ENCODE measurements at regions of chr6 and their contacts with region 1.

Region 1: GRCh38 chr6:31197559-31198305 is 27.2 kb upstream of the POU5F1 start:
- DNase-seq: peak; percentile 74
- H3K4me3 ChIP-seq: peak overlapping the region; percentile 51 to 88 (median 79)
- H3K27ac ChIP-seq: peak overlapping the region; percentile 93
- H3K4me1 ChIP-seq: peaks cover 4% of the 10 kb centered on the region
- H3K27me3 ChIP-seq: no peaks in the 10 kb centered on the region
- CTCF ChIP-seq: no peak
- POLR2A ChIP-seq: peak; percentile 27

Region 2: DNA sequence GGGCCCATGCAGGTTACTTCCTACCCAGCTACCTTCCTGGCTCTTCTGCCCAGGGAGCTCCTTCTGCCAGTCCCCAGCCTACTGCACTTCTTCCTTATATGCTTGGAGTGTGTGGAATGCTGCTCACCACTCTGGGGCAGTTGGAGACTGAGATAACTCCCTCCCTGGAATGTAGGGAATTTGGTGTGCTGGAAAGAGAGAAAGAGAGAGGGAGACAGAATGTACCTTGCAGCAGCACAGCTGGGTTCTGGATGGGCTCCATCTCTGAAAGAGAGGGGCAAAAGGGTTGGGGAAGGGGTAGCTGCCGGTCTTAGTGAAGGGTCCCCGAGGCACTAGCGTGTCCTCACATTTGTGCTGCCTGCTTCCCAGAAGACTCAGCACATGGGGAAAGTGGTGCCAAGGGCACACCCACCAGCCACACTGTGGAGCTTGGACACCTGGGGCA is 353.6 kb before region 1 on chr6:
- CTCF ChIA-PET with region 1: no interaction called
- POLR2A ChIA-PET with region 1: no interaction called
- dilution Hi-C with region 1: no loop called
- intact Hi-C with region 1: no loop called
- DNase-seq: no peak
- H3K4me3 ChIP-seq: no peak overlapping the region
- H3K27ac ChIP-seq: no peak overlapping the region
- H3K4me1 ChIP-seq: no peaks in the 10 kb centered on the region
- H3K27me3 ChIP-seq: peaks cover 10% of the 10 kb centered on the region in 2 experiments
- CTCF ChIP-seq: no peak
- POLR2A ChIP-seq: no peak

Region 3: DNA sequence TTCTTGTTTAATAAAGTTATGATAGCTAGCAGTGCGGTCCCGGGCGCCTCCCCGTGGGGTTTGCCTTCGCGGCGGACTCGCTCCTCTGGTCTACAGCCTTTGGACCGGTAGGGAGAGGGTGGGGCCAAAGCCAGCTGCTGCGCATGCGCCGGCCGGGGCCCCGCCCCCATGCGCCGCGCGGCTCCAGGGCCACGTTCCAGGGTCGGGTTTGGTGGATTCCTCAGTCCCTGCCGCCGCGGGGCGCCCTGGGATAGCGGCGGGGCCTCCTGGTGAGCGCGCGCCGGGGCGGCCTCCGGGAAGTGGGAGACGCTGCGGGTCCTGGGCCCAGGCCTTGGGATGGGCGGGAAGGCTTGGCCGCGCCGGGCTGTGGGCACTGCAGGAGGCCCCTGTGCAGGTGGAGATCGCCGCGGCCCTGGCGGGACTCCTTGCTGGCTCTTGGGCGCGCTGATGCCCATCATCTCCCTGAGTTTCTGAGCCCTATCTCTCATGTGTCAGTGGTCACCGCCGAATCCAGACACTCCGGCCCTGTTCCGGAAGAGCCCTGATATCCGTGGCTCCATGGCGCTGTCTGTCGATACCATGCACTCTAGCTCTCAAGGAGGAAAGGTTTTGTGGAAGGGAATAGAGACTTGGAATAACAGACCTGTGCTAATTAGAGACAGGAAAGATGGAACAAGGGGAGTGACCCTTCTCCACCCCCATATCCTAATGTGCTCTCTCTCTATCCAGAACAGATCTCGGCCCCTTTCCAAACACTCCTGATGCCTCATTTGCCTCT is 283.5 kb before region 1 on chr6 and contains the start of gene VARS2:
- CTCF ChIA-PET with region 1: interaction called, 10 read pairs
- POLR2A ChIA-PET with region 1: no interaction called
- dilution Hi-C with region 1: no loop called
- intact Hi-C with region 1: loop called (anchors 1 kb)
- DNase-seq: peak; percentile 95
- H3K4me3 ChIP-seq: peak within 1 kb of the TSS; percentile 37 to 54 (median 44)
- H3K27ac ChIP-seq: peak within 1 kb of the TSS; percentile 67
- H3K4me1 ChIP-seq: peaks cover 25% of the 10 kb centered on the region
- H3K27me3 ChIP-seq: no peaks in the 10 kb centered on the region
- CTCF ChIP-seq: peak in 1 of 2 donors; percentile 41
- POLR2A ChIP-seq: peak; percentile 91
- total RNA-seq, gene VARS2: 32.5 and 34.3 TPM in 2 replicates

Region 4: DNA sequence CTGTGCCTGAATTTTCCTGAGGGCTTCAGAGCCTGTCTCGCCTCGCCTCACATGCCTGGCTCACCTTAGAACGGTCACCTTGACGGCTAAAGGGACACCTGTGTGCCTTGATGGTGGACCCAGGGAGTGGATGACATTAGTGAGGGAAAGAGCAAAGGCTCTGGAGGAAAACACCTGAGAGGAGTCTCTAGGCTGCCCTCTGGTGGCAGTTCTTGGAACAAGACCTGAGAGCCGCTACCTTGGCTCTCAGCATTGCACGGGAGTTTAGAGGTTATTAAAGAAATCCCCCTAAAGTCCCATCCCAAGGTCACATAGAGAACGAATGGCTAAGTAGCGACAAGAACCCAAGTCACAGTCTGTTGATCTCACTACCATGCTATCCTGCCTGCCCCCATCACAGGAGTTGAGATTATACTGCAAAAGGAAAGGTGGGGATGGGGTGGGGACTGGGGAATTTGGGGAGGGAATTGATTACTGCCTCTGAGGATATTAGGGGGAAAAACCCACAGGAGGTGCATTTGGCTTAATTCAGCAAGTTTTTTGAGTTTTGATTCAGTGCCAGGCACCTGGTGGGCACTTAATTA is 69.5 kb before region 1 on chr6:
- CTCF ChIA-PET with region 1: interaction called, 26 read pairs
- POLR2A ChIA-PET with region 1: no interaction called
- dilution Hi-C with region 1: no loop called
- intact Hi-C with region 1: loop called (anchors 2 kb)
- DNase-seq: peak; percentile 47
- H3K4me3 ChIP-seq: no peak overlapping the region
- H3K27ac ChIP-seq: no peak overlapping the region
- H3K4me1 ChIP-seq: peaks cover 23% of the 10 kb centered on the region
- H3K27me3 ChIP-seq: peaks cover 3 to 6% of the 10 kb centered on the region in 2 experiments
- CTCF ChIP-seq: peak; percentile 80 to 89
- POLR2A ChIP-seq: no peak

Region 5: GRCh38 chr6:31158140-31158862 is 39.4 kb before region 1 on chr6 and contains the start of gene TCF19:
- CTCF ChIA-PET with region 1: interaction called, 9 read pairs
- POLR2A ChIA-PET with region 1: no interaction called
- dilution Hi-C with region 1: no loop called
- intact Hi-C with region 1: loop called (anchors 1 kb)
- DNase-seq: peak; percentile 100
- H3K4me3 ChIP-seq: peak within 1 kb of the TSS; percentile 72 to 90 (median 90)
- H3K27ac ChIP-seq: peak within 1 kb of the TSS; percentile 30
- H3K4me1 ChIP-seq: peaks cover 12% of the 10 kb centered on the region
- H3K27me3 ChIP-seq: no peaks in the 10 kb centered on the region
- CTCF ChIP-seq: no peak
- POLR2A ChIP-seq: peak; percentile 3
- total RNA-seq, gene TCF19: 28.0 and 31.7 TPM in 2 replicates

Region 6: GRCh38 chr6:31271641-31272357 is 74.1 kb after region 1 on chr6 and contains the start of gene HLA-C:
- CTCF ChIA-PET with region 1: interaction called, 3 read pairs
- POLR2A ChIA-PET with region 1: no interaction called
- dilution Hi-C with region 1: no loop called
- intact Hi-C with region 1: loop called (anchors 2 kb)
- DNase-seq: peak; percentile 96
- H3K4me3 ChIP-seq: peak within 1 kb of the TSS; percentile 65 to 75 (median 70)
- H3K27ac ChIP-seq: peak within 1 kb of the TSS; percentile 73
- H3K4me1 ChIP-seq: peaks cover 4% of the 10 kb centered on the region
- H3K27me3 ChIP-seq: peaks cover 8 to 23% of the 10 kb centered on the region in 2 experiments
- CTCF ChIP-seq: peak in 1 of 2 donors; percentile 9
- POLR2A ChIP-seq: peak; percentile 76
- total RNA-seq, gene HLA-C: 102 and 109 TPM in 2 replicates

Region 7: GRCh38 chr6:31375699-31376098 is 178.0 kb after region 1 on chr6:
- CTCF ChIA-PET with region 1: interaction called, 12 read pairs
- POLR2A ChIA-PET with region 1: interaction called, 3 read pairs
- dilution Hi-C with region 1: no loop called
- intact Hi-C with region 1: no loop called
- DNase-seq: no peak
- H3K4me3 ChIP-seq: no peak overlapping the region
- H3K27ac ChIP-seq: no peak overlapping the region
- H3K4me1 ChIP-seq: no peaks in the 10 kb centered on the region
- H3K27me3 ChIP-seq: peaks cover 10 to 15% of the 10 kb centered on the region in 2 experiments
- CTCF ChIP-seq: no peak
- POLR2A ChIP-seq: no peak

Measured in endothelial cell of umbilical vein (primary cell).